Mammary epithelial cell (primary cell): ENCODE measurements at regions of chr10 and their contacts with region 1.

Region 1: GRCh38 chr10:89522466-89522865 is 12.9 kb downstream of the SLC16A12 start:
- DNase-seq: no peak
- H3K4me3 ChIP-seq: no peak overlapping the region
- H3K27ac ChIP-seq: no peak overlapping the region
- H3K4me1 ChIP-seq: no peaks in the 10 kb centered on the region
- H3K27me3 ChIP-seq: no peaks in the 10 kb centered on the region
- CTCF ChIP-seq: no peak

Region 2: GRCh38 chr10:89438525-89438924 is 83.9 kb before region 1 on chr10:
- CTCF ChIA-PET with region 1: no interaction called
- dilution Hi-C with region 1: loop called (anchors 5 kb)
- in situ Hi-C with region 1: no loop called
- intact Hi-C with region 1: no loop called
- DNase-seq: no peak
- H3K4me3 ChIP-seq: no peak overlapping the region
- H3K27ac ChIP-seq: no peak overlapping the region
- H3K4me1 ChIP-seq: no peaks in the 10 kb centered on the region
- H3K27me3 ChIP-seq: no peaks in the 10 kb centered on the region
- CTCF ChIP-seq: no peak

Region 3: DNA sequence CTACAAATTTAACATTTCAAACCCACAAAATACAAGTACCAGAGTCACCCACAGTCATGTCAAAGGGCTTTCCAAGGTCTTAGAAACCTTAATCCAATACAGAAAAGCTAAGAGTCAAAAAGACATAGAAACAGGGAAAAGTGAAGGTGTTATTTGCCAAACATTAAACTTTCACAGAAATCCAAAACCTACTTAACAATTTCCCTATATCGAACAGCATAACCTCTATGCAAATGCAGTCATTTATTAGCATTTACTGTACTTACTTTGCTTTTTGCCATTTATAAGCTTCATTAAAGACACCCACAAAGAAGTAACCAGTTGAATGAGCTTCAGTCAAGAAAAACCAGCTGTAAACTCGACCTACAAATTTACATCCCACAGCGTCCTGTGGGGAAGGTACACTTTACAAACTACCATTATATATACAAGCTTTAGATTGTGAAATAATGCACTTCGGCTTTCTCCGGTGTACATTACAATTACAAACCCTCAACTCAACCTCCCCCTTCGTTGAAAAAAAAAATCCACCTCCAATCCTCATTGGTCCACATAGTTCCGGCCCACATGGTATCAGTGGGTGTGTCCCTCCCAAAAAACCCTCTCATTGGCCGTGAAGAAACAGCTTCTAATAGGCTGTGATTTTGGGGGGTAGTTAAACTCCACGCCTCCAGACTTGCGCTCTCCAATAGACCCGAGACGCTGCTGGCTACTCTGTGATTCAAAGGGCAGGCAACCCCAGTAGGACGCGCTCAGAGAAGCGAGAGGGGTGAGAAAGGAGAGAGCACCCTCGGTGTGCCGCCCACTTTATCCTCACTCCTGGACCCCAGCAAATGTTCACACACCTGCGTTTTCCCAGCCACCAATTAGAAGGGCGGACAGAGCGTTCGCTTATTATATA is 121.2 kb after region 1 on chr10:
- CTCF ChIA-PET with region 1: no interaction called
- dilution Hi-C with region 1: no loop called
- in situ Hi-C with region 1: no loop called
- intact Hi-C with region 1: no loop called
- DNase-seq: peak; percentile 98
- H3K4me3 ChIP-seq: peak overlapping the region; percentile 60 to 79 (median 79)
- H3K27ac ChIP-seq: peak overlapping the region; percentile 48
- H3K4me1 ChIP-seq: peaks cover 18% of the 10 kb centered on the region
- H3K27me3 ChIP-seq: no peaks in the 10 kb centered on the region
- CTCF ChIP-seq: no peak

Region 4: GRCh38 chr10:89665302-89665701 is 142.8 kb after region 1 on chr10:
- CTCF ChIA-PET with region 1: no interaction called
- dilution Hi-C with region 1: no loop called
- in situ Hi-C with region 1: no loop called
- intact Hi-C with region 1: no loop called
- DNase-seq: peak; percentile 87
- H3K4me3 ChIP-seq: no peak overlapping the region
- H3K27ac ChIP-seq: no peak overlapping the region
- H3K4me1 ChIP-seq: peaks cover 8% of the 10 kb centered on the region
- H3K27me3 ChIP-seq: no peaks in the 10 kb centered on the region
- CTCF ChIP-seq: peak; percentile 18 to 55

Region 5: DNA sequence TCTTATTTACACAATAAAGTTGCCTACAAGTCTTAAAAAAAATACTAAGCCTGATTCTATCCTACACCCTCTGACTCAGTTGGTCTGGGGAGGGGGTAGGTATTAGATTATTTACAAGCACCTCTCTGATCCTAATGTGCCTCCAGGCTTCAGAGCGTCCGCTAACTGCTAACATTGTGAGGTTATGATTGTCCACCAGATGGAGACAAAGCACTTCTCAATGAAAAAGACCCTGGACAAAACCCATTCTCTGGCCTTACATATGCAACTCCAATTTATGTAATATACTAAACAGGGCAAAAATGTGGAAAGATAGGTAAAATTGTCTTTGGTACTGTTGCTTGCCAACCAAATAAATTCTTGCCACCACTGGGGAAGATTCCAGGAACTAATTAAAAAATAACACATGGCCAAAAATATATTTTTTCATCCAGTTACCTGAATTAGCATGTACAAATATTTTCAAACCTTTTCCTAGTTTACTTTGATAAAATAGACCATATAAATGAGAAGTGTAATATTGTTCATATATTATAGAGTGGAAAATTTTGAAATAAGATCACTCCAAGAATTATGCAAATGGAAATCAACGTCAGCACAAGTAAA is 271.3 kb after region 1 on chr10:
- CTCF ChIA-PET with region 1: no interaction called
- dilution Hi-C with region 1: no loop called
- in situ Hi-C with region 1: no loop called
- intact Hi-C with region 1: no loop called
- DNase-seq: peak; percentile 59
- H3K4me3 ChIP-seq: no peak overlapping the region
- H3K27ac ChIP-seq: no peak overlapping the region
- H3K4me1 ChIP-seq: peaks cover 21% of the 10 kb centered on the region
- H3K27me3 ChIP-seq: no peaks in the 10 kb centered on the region
- CTCF ChIP-seq: peak; percentile 69 to 78